ENCODE measurements at regions of chr9 and their contacts with region 1.

Region 1: DNA sequence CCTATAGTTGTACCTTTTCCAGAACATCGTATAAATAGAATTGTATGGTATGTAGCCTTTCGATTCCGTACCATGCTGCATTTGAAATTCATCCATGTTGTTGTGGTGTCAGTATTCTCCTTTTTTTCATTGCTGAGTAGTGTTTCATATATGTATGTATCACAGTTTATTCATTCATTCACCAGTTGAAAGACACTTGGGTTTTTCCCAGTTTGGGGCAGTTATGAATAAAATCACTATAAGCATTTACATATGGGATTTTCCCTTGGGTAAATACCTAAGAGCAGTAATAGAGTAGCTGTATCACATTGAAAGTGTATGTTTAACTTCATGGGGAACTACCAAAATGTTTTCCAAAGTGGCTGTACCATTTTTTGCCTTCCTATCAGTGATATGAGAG is 16.1 kb upstream of the FKTN start:
- DNase-seq: no peak
- H3K4me3 Mint-ChIP-seq: no peak overlapping the region
- H3K27ac Mint-ChIP-seq: no peak overlapping the region
- H3K4me1 Mint-ChIP-seq: peaks cover 9% of the 10 kb centered on the region
- H3K27me3 Mint-ChIP-seq: peaks cover 7% of the 10 kb centered on the region

Region 2: DNA sequence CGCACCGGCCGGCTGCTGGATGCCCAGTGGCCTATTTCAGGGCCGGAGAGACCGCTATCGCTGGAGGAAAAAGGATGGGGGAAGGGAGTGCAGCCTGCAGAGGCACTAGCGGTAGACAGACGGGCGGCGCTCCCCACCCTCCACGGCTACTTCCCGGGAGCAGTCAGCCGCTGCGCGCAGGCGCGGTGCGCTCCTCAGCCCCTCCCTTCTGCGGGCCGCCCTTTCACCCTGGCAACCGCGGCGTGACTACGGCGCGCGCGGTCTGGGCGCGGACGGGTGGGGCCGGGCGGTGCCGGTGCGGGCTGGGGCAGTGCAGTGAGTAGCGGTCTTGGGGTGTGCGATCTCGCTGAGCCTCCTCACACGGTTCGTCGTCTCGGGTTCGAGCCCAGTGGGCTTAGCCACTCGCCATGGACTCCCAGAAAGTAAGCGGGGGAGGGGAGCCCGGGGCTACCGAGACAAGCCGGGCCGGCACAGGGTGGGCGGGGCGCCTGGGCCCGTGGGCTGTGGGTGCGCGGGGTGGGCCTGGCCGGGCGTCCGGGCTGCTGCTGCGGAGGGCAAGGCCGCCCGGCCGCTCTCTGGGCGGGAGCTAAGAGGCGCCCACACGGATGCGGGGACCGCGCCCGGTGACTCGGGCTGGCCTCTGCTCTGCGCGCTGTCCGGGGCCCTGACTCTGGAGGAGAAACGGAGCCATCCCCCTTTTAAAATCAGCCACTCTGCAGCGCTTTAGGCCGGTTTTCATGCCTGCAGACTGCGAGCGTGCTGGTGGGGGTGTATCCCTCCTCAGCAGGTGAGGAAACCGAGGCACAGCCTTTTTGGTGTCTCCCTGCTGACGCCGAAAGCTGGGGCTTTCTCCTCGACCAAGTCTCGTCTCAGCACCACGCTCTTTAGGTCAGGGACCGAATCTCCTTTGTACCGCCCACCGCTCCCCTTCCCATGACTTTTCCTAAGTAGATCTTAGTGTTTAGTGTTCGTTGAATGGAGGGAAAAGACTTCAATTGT is 93.7 kb before region 1 on chr9 and contains the start of gene FSD1L:
- CTCF ChIA-PET with region 1: no interaction called
- intact Hi-C with region 1: loop called (anchors 5 kb)
- DNase-seq: peak; percentile 87
- H3K4me3 Mint-ChIP-seq: peak within 1 kb of the TSS; percentile 79
- H3K27ac Mint-ChIP-seq: no peak within 1 kb of the TSS
- H3K4me1 Mint-ChIP-seq: peaks cover 10% of the 10 kb centered on the region
- H3K27me3 Mint-ChIP-seq: no peaks in the 10 kb centered on the region
- total RNA-seq, gene FSD1L: 0.79 to 0.86 TPM

Region 3: DNA sequence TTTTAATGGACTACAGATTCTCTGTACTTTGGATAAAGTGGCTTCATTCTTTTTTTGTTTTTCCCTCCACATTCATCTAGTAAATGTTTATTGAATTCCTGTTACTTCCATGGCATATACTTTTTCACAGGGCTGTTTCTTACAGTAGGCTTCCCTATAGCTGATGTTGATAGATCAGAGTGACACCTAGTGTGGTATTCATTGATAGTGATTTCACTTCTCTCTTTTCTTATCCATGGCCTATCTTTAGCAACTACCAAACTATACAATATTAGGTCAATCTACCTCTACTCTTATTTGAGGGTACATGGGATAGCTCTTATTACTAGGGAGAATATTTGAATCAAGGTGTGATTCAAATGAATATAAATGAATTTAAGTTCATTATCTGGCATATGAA is 58.2 kb before region 1 on chr9:
- CTCF ChIA-PET with region 1: no interaction called
- intact Hi-C with region 1: no loop called
- DNase-seq: no peak
- H3K4me3 Mint-ChIP-seq: no peak overlapping the region
- H3K27ac Mint-ChIP-seq: no peak overlapping the region
- H3K4me1 Mint-ChIP-seq: no peaks in the 10 kb centered on the region
- H3K27me3 Mint-ChIP-seq: no peaks in the 10 kb centered on the region

Region 4: DNA sequence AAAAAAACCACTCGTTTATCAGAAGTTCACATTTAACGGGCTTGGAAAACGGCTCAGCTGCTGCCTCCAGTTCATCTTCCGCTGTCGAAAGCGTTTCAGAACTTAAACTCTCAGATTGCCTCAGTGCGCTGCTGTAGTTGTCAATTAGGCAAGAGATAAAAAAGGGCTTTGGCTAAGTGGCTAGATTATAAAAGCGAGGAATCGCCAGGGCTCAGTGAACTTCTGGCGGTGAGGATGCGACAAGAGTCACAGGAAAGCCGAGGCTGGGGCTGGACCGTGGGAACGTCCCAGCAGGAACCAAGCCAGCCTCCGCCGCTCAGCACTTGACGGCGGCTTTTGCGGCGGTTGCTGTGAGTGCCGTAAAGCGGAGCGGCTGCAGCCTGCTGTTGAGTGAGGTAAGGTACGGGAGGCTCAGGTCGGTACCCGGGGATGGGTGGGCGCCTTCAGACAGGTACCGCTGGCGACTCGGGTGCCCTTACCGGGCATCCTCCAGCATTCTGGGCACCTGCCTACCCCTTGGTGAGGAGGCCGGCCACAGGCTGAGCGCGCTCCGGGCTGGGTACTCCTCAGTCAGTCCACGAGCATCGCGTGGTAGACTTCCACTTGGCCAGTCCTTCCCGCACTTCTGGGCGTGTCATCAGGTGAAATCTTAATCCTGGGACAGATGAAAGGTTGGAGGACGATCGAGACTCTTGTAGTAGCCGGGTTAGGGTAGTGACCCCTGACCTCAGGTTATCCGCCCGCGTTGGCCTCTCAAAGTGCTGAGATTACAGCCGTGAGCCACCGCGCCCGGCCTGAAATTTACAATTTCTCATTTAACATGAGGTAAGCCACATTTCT is 16.2 kb after region 1 on chr9 and contains the start of gene FKTN:
- CTCF ChIA-PET with region 1: no interaction called
- intact Hi-C with region 1: loop called (anchors 1 kb)
- DNase-seq: peak; percentile 88
- H3K4me3 Mint-ChIP-seq: peak within 1 kb of the TSS; percentile 85
- H3K27ac Mint-ChIP-seq: peak within 1 kb of the TSS; percentile 77
- H3K4me1 Mint-ChIP-seq: peaks cover 16% of the 10 kb centered on the region
- H3K27me3 Mint-ChIP-seq: no peaks in the 10 kb centered on the region
- total RNA-seq, gene FKTN: 8.0 to 9.6 TPM

Region 5: DNA sequence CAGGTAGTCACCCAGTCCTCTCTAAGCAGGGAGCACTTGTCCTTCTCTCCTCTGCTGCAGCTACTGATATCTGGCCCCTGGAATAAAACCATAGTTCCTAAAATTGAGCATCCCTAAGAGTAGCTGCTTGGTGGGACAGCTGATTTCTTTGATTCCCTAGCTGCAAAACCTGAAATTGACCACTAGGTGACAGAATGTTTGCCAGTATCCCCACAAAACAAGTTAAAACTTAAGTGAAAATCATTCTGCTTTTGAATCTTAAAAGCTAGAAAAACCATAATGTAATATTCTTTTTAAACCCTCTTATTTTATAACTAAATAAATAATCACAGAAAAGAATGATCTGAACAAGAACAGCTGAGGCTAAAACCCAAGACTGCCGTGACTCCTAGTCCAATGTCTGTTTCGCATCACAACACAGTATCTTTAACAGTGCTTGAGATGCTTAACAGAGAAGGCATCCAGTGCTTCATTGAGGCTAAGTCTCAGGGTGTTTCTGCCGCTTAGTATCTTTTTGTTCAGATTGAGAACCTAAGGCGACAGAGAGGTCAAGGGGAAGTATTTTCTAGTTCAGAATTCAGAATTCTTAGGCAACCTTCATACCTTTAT is 96.1 kb after region 1 on chr9:
- CTCF ChIA-PET with region 1: no interaction called
- intact Hi-C with region 1: no loop called
- DNase-seq: no peak
- H3K4me3 Mint-ChIP-seq: no peak overlapping the region
- H3K27ac Mint-ChIP-seq: no peak overlapping the region
- H3K4me1 Mint-ChIP-seq: no peaks in the 10 kb centered on the region
- H3K27me3 Mint-ChIP-seq: no peaks in the 10 kb centered on the region

Region 6: DNA sequence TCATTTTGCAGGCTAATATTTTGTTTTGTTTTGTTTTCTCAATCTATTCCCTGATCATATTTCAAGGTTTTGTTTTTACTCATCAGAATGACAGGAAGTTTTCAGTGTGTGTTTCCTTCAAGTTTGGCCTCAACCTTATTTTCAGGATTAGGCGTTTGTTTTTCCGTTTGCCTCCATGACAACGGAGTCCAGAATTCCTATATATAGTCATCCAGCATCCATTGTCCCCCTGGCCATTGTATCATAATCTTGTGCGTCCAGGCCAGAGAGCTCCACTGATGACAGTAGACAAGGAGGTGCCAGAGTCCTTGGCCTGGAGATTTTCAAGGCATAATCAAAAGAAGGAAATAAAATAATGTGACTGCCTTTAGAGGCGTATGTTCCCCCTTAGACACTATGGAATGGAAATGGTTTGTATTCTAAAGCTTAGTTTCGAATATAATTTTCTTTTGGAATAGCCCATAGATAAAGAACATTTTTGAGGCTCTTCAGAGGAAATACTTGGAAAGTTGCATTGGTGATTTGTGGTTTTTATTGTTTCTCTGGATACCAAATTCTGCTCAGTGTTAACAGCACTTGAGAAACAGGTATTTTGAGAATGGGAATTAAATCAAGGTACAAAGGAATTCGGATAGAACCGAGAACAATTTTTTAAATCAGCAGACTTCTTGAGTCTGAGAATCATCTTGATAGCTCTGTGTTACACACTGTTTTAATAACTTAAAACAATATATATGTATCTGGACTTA is 1421.0 kb after region 1 on chr9:
- CTCF ChIA-PET with region 1: no interaction called
- intact Hi-C with region 1: loop called (anchors 5 kb)
- DNase-seq: no peak
- H3K4me3 Mint-ChIP-seq: no peak overlapping the region
- H3K27ac Mint-ChIP-seq: no peak overlapping the region
- H3K4me1 Mint-ChIP-seq: peaks cover 22% of the 10 kb centered on the region
- H3K27me3 Mint-ChIP-seq: peaks cover 3% of the 10 kb centered on the region